Naive thymus-derived CD4-positive, alpha-beta T cell (primary cell): ENCODE measurements at regions of chr18 and their contacts with region 1.

Region 1: GRCh38 chr18:2655178-2655953 is at the start of gene SMCHD1:
- DNase-seq: peak; percentile 83 to 95 (median 90)
- ATAC-seq: peak; percentile 88
- H3K4me3 ChIP-seq: peak within 1 kb of the TSS; percentile 97
- H3K4me3 Mint-ChIP-seq: peak within 1 kb of the TSS; percentile 91 to 99 (median 95)
- H3K27ac ChIP-seq: peak within 1 kb of the TSS; percentile 100
- H3K27ac Mint-ChIP-seq: peak within 1 kb of the TSS; percentile 91 to 99 (median 96)
- H3K4me1 ChIP-seq: peaks cover 23 to 38% of the 10 kb centered on the region in 2 donors
- H3K4me1 Mint-ChIP-seq: peaks cover 23 to 66% (median 50%) of the 10 kb centered on the region in 7 donors
- H3K27me3 ChIP-seq: no peaks in the 10 kb centered on the region
- H3K27me3 Mint-ChIP-seq: no peaks in the 10 kb centered on the region
- total RNA-seq, gene SMCHD1: 181 to 305 (median 236) TPM

Region 2: GRCh38 chr18:2547477-2548087 is 107.8 kb before region 1 on chr18:
- CTCF ChIA-PET with region 1: interaction called, 3 read pairs
- POLR2A ChIA-PET with region 1: interaction called, 4 read pairs
- intact Hi-C with region 1: loop called in 1 of 2 experiments (anchors 1 kb)
- DNase-seq: peak in 7 of 9 donors; percentile 13 to 50 (median 37)
- ATAC-seq: peak; percentile 72
- H3K4me3 ChIP-seq: no peak overlapping the region
- H3K4me3 Mint-ChIP-seq: no peak overlapping the region
- H3K27ac ChIP-seq: no peak overlapping the region
- H3K27ac Mint-ChIP-seq: peak overlapping the region in 3 of 9 donors; percentile 0 to 10 (median 6)
- H3K4me1 ChIP-seq: no peaks in the 10 kb centered on the region
- H3K4me1 Mint-ChIP-seq: peaks cover 3 to 33% (median 23%) of the 10 kb centered on the region in 7 donors
- H3K27me3 ChIP-seq: no peaks in the 10 kb centered on the region
- H3K27me3 Mint-ChIP-seq: no peaks in the 10 kb centered on the region

Region 3: DNA sequence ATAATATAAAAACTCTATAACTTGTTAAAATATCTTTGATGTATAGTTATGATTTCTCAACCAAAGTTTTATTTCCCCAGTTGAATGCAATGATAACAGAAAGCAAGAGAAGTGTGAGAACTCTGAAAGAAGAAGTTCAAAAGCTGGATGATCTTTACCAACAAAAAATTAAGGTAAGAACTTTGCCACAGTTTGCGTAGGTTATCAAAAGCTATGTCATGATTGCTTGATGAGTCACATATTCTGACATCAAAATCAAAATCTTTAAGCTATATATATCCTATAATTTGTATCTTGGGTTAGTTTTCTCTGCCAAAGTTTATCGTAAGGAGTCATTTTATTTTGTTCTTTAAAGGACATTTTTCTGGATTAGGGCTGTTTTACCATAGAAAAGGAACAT is 49.0 kb before region 1 on chr18:
- CTCF ChIA-PET with region 1: interaction called, 10 read pairs
- POLR2A ChIA-PET with region 1: interaction called, 75 read pairs
- intact Hi-C with region 1: loop called (anchors 1 kb)
- DNase-seq: peak in 6 of 9 donors; percentile 42 to 65 (median 53)
- ATAC-seq: peak; percentile 73
- H3K4me3 ChIP-seq: no peak overlapping the region
- H3K4me3 Mint-ChIP-seq: peak overlapping the region; percentile 16 to 84 (median 70)
- H3K27ac ChIP-seq: peak overlapping the region; percentile 73
- H3K27ac Mint-ChIP-seq: peak overlapping the region; percentile 79 to 94 (median 87)
- H3K4me1 ChIP-seq: peaks cover 28 to 35% of the 10 kb centered on the region in 2 donors
- H3K4me1 Mint-ChIP-seq: peaks cover 22 to 79% (median 64%) of the 10 kb centered on the region in 7 donors
- H3K27me3 ChIP-seq: no peaks in the 10 kb centered on the region
- H3K27me3 Mint-ChIP-seq: no peaks in the 10 kb centered on the region

Region 4: DNA sequence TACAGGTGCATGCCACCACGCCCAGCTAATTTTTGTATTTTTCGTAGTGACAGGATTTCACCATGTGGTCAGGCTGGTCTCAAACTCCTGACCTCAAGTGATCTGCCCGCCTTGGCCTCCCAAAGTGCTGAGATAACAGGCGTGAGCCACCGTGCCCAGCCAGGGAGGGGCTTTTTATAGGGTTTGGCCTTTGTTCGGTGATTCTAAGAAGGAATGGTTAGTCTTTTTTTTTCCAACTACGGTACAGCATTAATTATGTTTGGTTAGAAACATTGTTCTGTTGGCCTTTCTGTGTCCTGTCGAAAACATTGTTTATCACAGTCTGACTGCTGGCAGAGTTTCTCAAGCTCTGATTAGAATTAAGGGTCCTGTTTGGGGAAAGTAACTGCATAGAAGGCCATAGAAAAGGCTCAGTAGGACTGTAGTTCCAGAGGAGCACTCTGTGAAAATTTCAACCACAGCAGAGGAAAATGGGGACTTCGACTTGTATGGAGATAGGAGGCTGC is 19.2 kb before region 1 on chr18:
- CTCF ChIA-PET with region 1: interaction called, 20 read pairs
- POLR2A ChIA-PET with region 1: interaction called, 424 read pairs
- intact Hi-C with region 1: loop called (anchors 1 kb)
- DNase-seq: no peak
- ATAC-seq: peak; percentile 47
- H3K4me3 ChIP-seq: peak overlapping the region; percentile 46
- H3K4me3 Mint-ChIP-seq: peak overlapping the region in 9 of 10 donors; percentile 68 to 93 (median 86)
- H3K27ac ChIP-seq: peak overlapping the region; percentile 83
- H3K27ac Mint-ChIP-seq: peak overlapping the region in 6 of 9 donors; percentile 98 to 100 (median 100)
- H3K4me1 ChIP-seq: peaks cover 65 to 74% of the 10 kb centered on the region in 2 donors
- H3K4me1 Mint-ChIP-seq: peaks cover 0 to 100% (median 79%) of the 10 kb centered on the region in 7 donors
- H3K27me3 ChIP-seq: no peaks in the 10 kb centered on the region
- H3K27me3 Mint-ChIP-seq: no peaks in the 10 kb centered on the region

Region 5: DNA sequence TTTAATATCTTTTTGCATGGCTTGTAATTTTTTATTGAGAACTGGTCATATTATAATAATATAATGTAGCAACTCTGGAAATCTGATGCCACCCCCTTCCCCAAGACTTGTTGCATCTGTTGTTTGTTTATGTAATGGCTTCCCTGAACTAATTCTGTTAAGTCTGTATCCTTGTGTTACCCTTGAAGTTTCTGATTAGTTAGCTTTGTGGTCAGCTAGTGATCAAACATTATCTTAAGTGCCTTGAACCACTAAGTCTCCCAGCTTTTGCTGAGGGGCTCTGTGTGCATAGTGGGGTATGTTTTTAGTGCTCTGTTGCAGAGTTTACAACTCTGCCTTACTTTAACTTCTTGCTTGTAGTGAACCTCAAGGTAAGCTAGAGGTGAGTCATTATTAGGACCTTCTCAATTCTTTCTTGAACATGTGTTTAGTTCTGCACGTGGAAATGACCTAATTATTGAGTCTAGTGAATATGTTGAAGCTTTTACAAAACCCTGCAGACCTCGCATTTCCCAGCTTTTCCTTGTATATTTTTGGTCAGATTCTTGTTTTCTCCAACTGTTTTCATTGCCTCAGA is 24.9 kb after region 1 on chr18:
- CTCF ChIA-PET with region 1: no interaction called
- POLR2A ChIA-PET with region 1: interaction called, 31 read pairs
- intact Hi-C with region 1: loop called (anchors 2 kb)
- DNase-seq: no peak
- ATAC-seq: no peak
- H3K4me3 ChIP-seq: no peak overlapping the region
- H3K4me3 Mint-ChIP-seq: peak overlapping the region in 4 of 10 donors; percentile 7 to 55 (median 36)
- H3K27ac ChIP-seq: no peak overlapping the region
- H3K27ac Mint-ChIP-seq: peak overlapping the region in 8 of 9 donors; percentile 13 to 75 (median 63)
- H3K4me1 ChIP-seq: peaks cover 22 to 23% of the 10 kb centered on the region in 2 donors
- H3K4me1 Mint-ChIP-seq: peaks cover 40 to 89% (median 77%) of the 10 kb centered on the region in 7 donors
- H3K27me3 ChIP-seq: no peaks in the 10 kb centered on the region
- H3K27me3 Mint-ChIP-seq: no peaks in the 10 kb centered on the region

Region 6: GRCh38 chr18:3012964-3013804 is 357.8 kb after region 1 on chr18 and contains the start of gene LPIN2:
- CTCF ChIA-PET with region 1: no interaction called
- POLR2A ChIA-PET with region 1: no interaction called
- intact Hi-C with region 1: loop called in 1 of 2 experiments (anchors 1 kb)
- DNase-seq: peak; percentile 96 to 98 (median 98)
- ATAC-seq: peak; percentile 92
- H3K4me3 ChIP-seq: peak within 1 kb of the TSS; percentile 61
- H3K4me3 Mint-ChIP-seq: peak within 1 kb of the TSS; percentile 93 to 99 (median 95)
- H3K27ac ChIP-seq: peak within 1 kb of the TSS; percentile 84
- H3K27ac Mint-ChIP-seq: peak within 1 kb of the TSS; percentile 91 to 98 (median 95)
- H3K4me1 ChIP-seq: peaks cover 8 to 61% of the 10 kb centered on the region in 2 donors
- H3K4me1 Mint-ChIP-seq: peaks cover 56 to 79% (median 74%) of the 10 kb centered on the region in 7 donors
- H3K27me3 ChIP-seq: no peaks in the 10 kb centered on the region
- H3K27me3 Mint-ChIP-seq: no peaks in the 10 kb centered on the region
- total RNA-seq, gene LPIN2: 58.8 to 133 (median 73.6) TPM